WTC11 (cell line): ENCODE measurements at regions of chr2 and their contacts with region 1.

Region 1: DNA sequence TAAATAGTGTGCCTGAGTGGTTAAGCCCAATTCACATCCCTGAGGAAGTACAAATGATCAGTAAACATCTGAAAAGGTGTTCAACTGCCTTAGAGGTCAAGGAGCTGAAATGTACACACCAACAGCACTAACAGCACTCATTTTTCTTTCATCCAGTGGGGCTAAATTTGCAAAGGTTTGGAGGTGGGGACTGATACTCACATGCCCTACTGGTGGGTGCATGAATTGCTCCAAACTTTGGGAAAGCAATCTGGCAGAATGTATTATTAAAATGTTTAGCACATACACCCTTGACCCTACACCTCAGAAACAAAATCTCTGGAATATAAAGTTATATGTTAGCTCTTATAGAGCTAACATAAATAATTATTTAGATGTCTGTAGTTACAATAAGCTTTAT is 19.0 kb upstream of the FAM178B start:
- DNase-seq: no peak
- ATAC-seq: peak; percentile 50; the same call in 1 of the 2 replicates
- H3K4me3 Mint-ChIP-seq: no peak overlapping the region
- H3K27ac Mint-ChIP-seq: no peak overlapping the region
- H3K4me1 Mint-ChIP-seq: no peaks in the 10 kb centered on the region
- H3K27me3 Mint-ChIP-seq: no peaks in the 10 kb centered on the region; the same call in 1 of the 2 replicates
- CTCF ChIP-seq: no peak

Region 2: GRCh38 chr2:96985181-96985945 is 20.0 kb before region 1 on chr2:
- CTCF ChIA-PET with region 1: interaction called, 11 read pairs
- POLR2A ChIA-PET with region 1: interaction called, 3 read pairs
- DNase-seq: peak; percentile 45
- ATAC-seq: peak; percentile 88
- H3K4me3 Mint-ChIP-seq: no peak overlapping the region
- H3K27ac Mint-ChIP-seq: no peak overlapping the region
- H3K4me1 Mint-ChIP-seq: peaks cover 19% of the 10 kb centered on the region
- H3K27me3 Mint-ChIP-seq: no peaks in the 10 kb centered on the region
- CTCF ChIP-seq: no peak